ENCODE measurements at regions of chr10 and their contacts with region 1.

Region 1: GRCh38 chr10:32445740-32446535 is at the start of gene CCDC7:
- DNase-seq: peak; percentile 62
- ATAC-seq: peak; percentile 98
- H3K4me3 ChIP-seq: peak within 1 kb of the TSS; percentile 97
- H3K27ac ChIP-seq: peak within 1 kb of the TSS; percentile 99
- H3K4me1 ChIP-seq: no peaks in the 10 kb centered on the region
- H3K27me3 ChIP-seq: no peaks in the 10 kb centered on the region
- CTCF ChIP-seq: peak; percentile 43 to 66 (median 61); a peak in 5 of 6 replicates
- EP300 ChIP-seq: 0 out of 4 replicates have a peak, but pooled peaks of 1 of the 2 experiments have one; percentile 32
- POLR2A ChIP-seq: peak; percentile 95
- RAD21 ChIP-seq: peak; percentile 31
- polyA plus RNA-seq, gene CCDC7: 2.1 to 3.3 TPM

Region 2: DNA sequence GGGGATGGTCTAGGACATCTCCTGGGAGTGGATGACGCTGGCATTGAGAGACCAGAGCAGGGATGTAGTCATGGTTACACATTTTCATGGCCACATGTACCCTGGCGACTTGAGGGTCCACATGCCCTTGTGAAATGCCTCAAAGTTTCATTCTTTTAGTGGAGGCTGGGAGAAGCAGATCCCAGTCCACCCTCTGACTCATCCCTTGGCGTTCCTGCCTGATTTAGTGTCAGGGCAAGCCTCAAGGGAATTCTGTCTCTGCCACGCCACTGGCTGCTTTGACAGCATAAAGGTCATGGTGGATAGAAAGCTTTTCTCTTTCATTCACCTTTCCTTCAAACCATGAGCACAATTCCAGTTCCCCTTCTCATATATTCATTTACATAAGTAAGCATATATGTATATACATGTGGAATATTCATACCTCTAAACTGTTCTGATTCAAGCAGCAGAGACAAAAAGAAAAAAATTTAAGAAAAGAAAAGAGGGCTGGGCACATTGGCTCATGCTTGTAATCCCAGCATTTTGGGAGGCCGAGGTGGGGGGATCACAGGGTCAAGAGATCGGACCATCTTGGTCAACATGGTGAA is 367.9 kb before region 1 on chr10:
- CTCF ChIA-PET with region 1: no interaction called
- POLR2A ChIA-PET with region 1: no interaction called
- RAD21 ChIA-PET with region 1: no interaction called
- SMC1A ChIA-PET with region 1: no interaction called
- in situ Hi-C with region 1: no loop called
- intact Hi-C with region 1: loop called (anchors 10 kb)
- DNase-seq: no peak
- ATAC-seq: no peak
- H3K4me3 ChIP-seq: no peak overlapping the region
- H3K27ac ChIP-seq: no peak overlapping the region
- H3K4me1 ChIP-seq: no peaks in the 10 kb centered on the region
- H3K27me3 ChIP-seq: no peaks in the 10 kb centered on the region
- CTCF ChIP-seq: no peak
- EP300 ChIP-seq: no peak
- POLR2A ChIP-seq: no peak
- RAD21 ChIP-seq: no peak

Region 3: GRCh38 chr10:32263300-32263699 is 182.6 kb before region 1 on chr10:
- CTCF ChIA-PET with region 1: no interaction called
- POLR2A ChIA-PET with region 1: no interaction called
- RAD21 ChIA-PET with region 1: no interaction called
- SMC1A ChIA-PET with region 1: no interaction called
- in situ Hi-C with region 1: no loop called
- intact Hi-C with region 1: no loop called
- DNase-seq: no peak
- ATAC-seq: peak; percentile 21; the same call in 1 of the 3 replicates
- H3K4me3 ChIP-seq: no peak overlapping the region
- H3K27ac ChIP-seq: no peak overlapping the region
- H3K4me1 ChIP-seq: no peaks in the 10 kb centered on the region
- H3K27me3 ChIP-seq: no peaks in the 10 kb centered on the region
- CTCF ChIP-seq: no peak
- EP300 ChIP-seq: no peak
- POLR2A ChIP-seq: no peak
- RAD21 ChIP-seq: no peak

Region 4: DNA sequence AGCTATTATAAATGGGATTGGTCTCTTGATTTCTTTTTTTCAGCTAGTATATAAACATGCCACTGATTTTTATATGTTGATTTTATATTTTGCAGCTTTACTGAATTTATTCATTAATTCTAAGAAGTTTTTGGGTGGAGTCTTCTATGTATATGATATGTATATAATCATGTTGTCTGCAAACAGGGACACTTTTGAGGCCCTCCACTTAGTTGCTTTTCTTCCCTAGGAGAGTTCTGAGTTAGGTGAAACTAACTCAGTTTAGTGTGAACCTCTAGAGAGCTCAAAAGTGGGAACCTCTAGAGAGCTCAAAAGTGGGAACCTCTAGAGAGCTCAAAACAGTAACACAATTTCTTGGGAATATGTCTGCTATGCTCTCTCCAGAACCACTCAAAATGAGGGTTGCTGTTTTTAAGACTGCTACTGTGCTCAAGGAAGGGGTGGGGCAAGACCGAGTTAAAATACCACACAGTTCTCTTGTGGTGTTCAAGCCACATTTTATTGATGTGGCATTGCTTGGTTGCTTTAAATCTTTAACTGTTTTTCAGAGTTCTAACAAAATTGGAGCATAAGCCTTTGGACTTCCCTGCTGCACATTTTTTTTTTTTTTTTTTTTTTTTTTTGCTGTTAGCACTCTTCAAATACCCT is 13.2 kb after region 1 on chr10:
- CTCF ChIA-PET with region 1: no interaction called
- POLR2A ChIA-PET with region 1: no interaction called
- RAD21 ChIA-PET with region 1: interaction called, 6 read pairs
- SMC1A ChIA-PET with region 1: interaction called, 10 read pairs
- in situ Hi-C with region 1: no loop called
- intact Hi-C with region 1: no loop called
- DNase-seq: no peak
- ATAC-seq: peak; percentile 45
- H3K4me3 ChIP-seq: no peak overlapping the region
- H3K27ac ChIP-seq: no peak overlapping the region
- H3K4me1 ChIP-seq: no peaks in the 10 kb centered on the region
- H3K27me3 ChIP-seq: no peaks in the 10 kb centered on the region
- CTCF ChIP-seq: no peak
- EP300 ChIP-seq: no peak
- POLR2A ChIP-seq: no peak
- RAD21 ChIP-seq: no peak

Region 5: DNA sequence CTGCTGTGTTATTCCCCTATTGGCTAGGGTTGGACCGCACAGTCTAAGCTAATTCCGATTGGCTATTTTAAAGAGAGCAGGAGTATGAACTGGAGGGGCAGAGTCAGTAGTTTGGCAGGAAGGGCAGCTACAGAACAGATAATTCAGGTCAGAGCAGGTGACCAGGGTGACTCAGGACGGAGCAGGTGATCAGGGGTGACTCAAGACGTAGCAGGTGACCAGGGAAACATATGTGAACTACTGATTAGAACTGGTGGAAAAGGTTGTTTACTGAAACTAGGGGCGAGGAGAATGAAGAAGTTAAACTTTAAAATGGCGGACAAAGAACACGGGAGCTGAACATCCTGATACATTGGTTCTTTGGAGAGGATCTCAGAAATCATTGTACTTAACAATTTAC is 102.3 kb after region 1 on chr10:
- CTCF ChIA-PET with region 1: no interaction called
- POLR2A ChIA-PET with region 1: no interaction called
- RAD21 ChIA-PET with region 1: no interaction called
- SMC1A ChIA-PET with region 1: no interaction called
- in situ Hi-C with region 1: no loop called
- intact Hi-C with region 1: no loop called
- DNase-seq: no peak
- ATAC-seq: no peak
- H3K4me3 ChIP-seq: no peak overlapping the region
- H3K27ac ChIP-seq: no peak overlapping the region
- H3K4me1 ChIP-seq: no peaks in the 10 kb centered on the region
- H3K27me3 ChIP-seq: no peaks in the 10 kb centered on the region
- CTCF ChIP-seq: no peak
- EP300 ChIP-seq: no peak
- POLR2A ChIP-seq: no peak
- RAD21 ChIP-seq: no peak

Region 6: GRCh38 chr10:32954080-32954479 is 508.1 kb after region 1 on chr10:
- CTCF ChIA-PET with region 1: no interaction called
- POLR2A ChIA-PET with region 1: no interaction called
- RAD21 ChIA-PET with region 1: no interaction called
- SMC1A ChIA-PET with region 1: no interaction called
- in situ Hi-C with region 1: no loop called
- intact Hi-C with region 1: loop called (anchors 2 kb)
- DNase-seq: no peak
- ATAC-seq: no peak; the same call in 2 of the 3 replicates
- H3K4me3 ChIP-seq: no peak overlapping the region
- H3K27ac ChIP-seq: no peak overlapping the region
- H3K4me1 ChIP-seq: peaks cover 9% of the 10 kb centered on the region
- H3K27me3 ChIP-seq: no peaks in the 10 kb centered on the region
- CTCF ChIP-seq: peak in 2 of 3 experiments; percentile 26 to 32; a peak in 2 of 6 replicates
- EP300 ChIP-seq: no peak
- POLR2A ChIP-seq: no peak
- RAD21 ChIP-seq: peak; percentile 54

Measured in GM12878 (cell line).